ENCODE measurements at regions of chr1 and their contacts with region 1.

Region 1: GRCh38 chr1:145601593-145601992 is 6.2 kb upstream of the GPR89A start:
- DNase-seq: no peak
- ATAC-seq: no peak
- H3K4me3 Mint-ChIP-seq: no peak overlapping the region
- H3K27ac Mint-ChIP-seq: no peak overlapping the region
- H3K4me1 Mint-ChIP-seq: no peaks in the 10 kb centered on the region
- H3K27me3 Mint-ChIP-seq: peaks cover 9% of the 10 kb centered on the region
- CTCF ChIP-seq: no peak

Region 2: GRCh38 chr1:145545055-145545454 is 56.5 kb before region 1 on chr1:
- CTCF ChIA-PET with region 1: no interaction called
- POLR2A ChIA-PET with region 1: no interaction called
- intact Hi-C with region 1: no loop called
- DNase-seq: no peak
- ATAC-seq: no peak
- H3K4me3 Mint-ChIP-seq: no peak overlapping the region
- H3K27ac Mint-ChIP-seq: no peak overlapping the region
- H3K4me1 Mint-ChIP-seq: no peaks in the 10 kb centered on the region
- H3K27me3 Mint-ChIP-seq: peaks cover 17% of the 10 kb centered on the region
- CTCF ChIP-seq: no peak

Region 3: GRCh38 chr1:145720877-145721671 is 119.5 kb after region 1 on chr1:
- CTCF ChIA-PET with region 1: no interaction called
- POLR2A ChIA-PET with region 1: no interaction called
- intact Hi-C with region 1: loop called (anchors 10 kb)
- DNase-seq: peak; percentile 71
- ATAC-seq: peak; percentile 88
- H3K4me3 Mint-ChIP-seq: peak overlapping the region; percentile 68
- H3K27ac Mint-ChIP-seq: no peak overlapping the region
- H3K4me1 Mint-ChIP-seq: peaks cover 12% of the 10 kb centered on the region
- H3K27me3 Mint-ChIP-seq: peaks cover 18% of the 10 kb centered on the region
- CTCF ChIP-seq: peak; percentile 72

Measured in activated B cell treated with CpG ODN at 0.5 μM for 24 hours (primary cell).